Esophagus squamous epithelium (tissue), 5 donors: ENCODE measurements at regions of chr3 and their contacts with region 1.

Region 1: GRCh38 chr3:15268033-15268631 is 62.1 kb downstream of the CAPN7 start:
- DNase-seq: peak; percentile 24
- H3K4me3 ChIP-seq: no peak overlapping the region
- H3K27ac ChIP-seq: peak overlapping the region in 3 of 4 donors; percentile 26 to 84 (median 70)
- H3K4me1 ChIP-seq: peaks cover 18 to 52% (median 26%) of the 10 kb centered on the region in 3 donors
- H3K27me3 ChIP-seq: no peaks in the 10 kb centered on the region
- CTCF ChIP-seq: peak; percentile 87 to 97 (median 94)
- POLR2A ChIP-seq: no peak

Region 2: GRCh38 chr3:15332405-15333098 is 64.4 kb after region 1 on chr3 and contains the start of gene SH3BP5:
- intact Hi-C with region 1: loop called (anchors 5 kb)
- DNase-seq: no peak
- H3K4me3 ChIP-seq: peak within 1 kb of the TSS; percentile 66 to 91 (median 80)
- H3K27ac ChIP-seq: peak within 1 kb of the TSS; percentile 77 to 94 (median 88)
- H3K4me1 ChIP-seq: peaks cover 18 to 57% (median 18%) of the 10 kb centered on the region in 3 donors
- H3K27me3 ChIP-seq: no peaks in the 10 kb centered on the region
- CTCF ChIP-seq: peak; percentile 60 to 86 (median 82)
- POLR2A ChIP-seq: peak in 2 of 4 donors; percentile 71 to 81
- total RNA-seq, gene SH3BP5: 8.5 to 33.8 (median 18.0) TPM

Region 3: DNA sequence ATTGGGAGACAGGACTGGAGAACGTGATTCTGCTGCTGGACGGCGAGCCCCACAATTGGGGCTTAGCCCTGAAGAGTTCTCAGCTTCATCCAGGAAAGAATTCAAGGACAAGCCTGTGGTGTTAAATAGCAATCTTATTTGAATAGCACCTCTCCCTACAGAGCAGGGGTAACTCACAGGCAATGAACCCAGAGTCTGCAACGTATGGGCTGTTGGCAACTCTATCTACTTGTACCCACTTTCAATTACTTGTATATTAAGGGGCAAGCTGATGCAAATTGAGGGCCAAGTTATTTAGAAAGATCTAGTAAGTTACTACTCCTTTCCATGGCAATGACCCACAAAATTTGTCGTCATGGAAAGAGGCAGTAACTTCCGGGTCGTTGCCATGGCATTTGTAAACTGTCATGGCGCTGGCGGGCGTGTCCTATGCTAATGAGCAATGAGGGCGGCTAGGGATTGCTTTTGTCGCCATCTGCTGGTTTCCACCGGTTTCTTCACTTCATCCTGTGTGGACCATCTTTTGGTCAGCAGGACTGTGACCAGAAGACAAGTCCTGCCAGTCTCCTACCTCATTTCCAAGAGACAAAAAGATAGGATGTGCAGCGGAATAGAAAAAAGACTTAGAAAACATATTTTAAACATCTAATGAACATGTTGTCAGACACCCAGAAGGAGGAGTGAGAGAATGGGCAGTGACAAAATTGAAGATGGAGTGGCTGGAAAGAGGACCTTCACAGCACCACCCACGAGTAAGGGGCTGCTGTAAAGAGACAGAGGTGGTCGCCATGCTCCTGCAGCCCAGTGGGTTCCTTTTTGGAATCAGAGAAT is 110.0 kb after region 1 on chr3:
- intact Hi-C with region 1: loop called (anchors 5 kb)
- DNase-seq: peak; percentile 88
- H3K4me3 ChIP-seq: peak overlapping the region in 1 of 4 donors; percentile 38
- H3K27ac ChIP-seq: peak overlapping the region; percentile 26 to 59 (median 44)
- H3K4me1 ChIP-seq: peaks cover 0 to 4% (median 3%) of the 10 kb centered on the region in 3 donors
- H3K27me3 ChIP-seq: no peaks in the 10 kb centered on the region
- CTCF ChIP-seq: peak; percentile 76 to 94 (median 88)
- POLR2A ChIP-seq: no peak